ENCODE measurements at regions of chr10 and their contacts with region 1.

Region 1: GRCh38 chr10:73772280-73773151 is 9.3 kb upstream of the CHCHD1 start:
- DNase-seq: peak; percentile 80
- ATAC-seq: peak; percentile 67
- H3K4me3 Mint-ChIP-seq: peak overlapping the region; percentile 91
- H3K27ac Mint-ChIP-seq: peak overlapping the region; percentile 91
- H3K4me1 Mint-ChIP-seq: peaks cover 64% of the 10 kb centered on the region
- H3K27me3 Mint-ChIP-seq: no peaks in the 10 kb centered on the region
- CTCF ChIP-seq: no peak

Region 2: DNA sequence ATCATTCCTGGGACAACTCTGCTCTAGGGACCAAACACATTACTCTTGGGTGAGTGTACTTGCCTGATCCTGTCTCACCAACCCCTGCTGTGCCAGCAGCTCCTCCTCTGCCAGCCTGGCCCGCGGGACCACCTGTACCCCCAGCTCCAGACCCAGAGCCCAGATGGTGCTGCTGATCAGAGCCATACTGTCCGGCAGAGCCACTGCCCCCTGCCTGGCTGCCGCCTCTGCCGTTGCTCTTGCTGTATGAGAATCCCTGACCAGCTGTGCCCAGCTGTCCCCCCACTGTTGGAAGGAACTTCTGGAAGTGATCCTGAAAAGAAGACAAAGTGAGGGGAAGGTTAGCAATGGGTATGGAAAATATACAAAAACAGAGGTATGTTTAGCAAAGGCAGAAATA is 138.1 kb before region 1 on chr10:
- CTCF ChIA-PET with region 1: no interaction called
- POLR2A ChIA-PET with region 1: no interaction called
- intact Hi-C with region 1: no loop called
- DNase-seq: no peak
- ATAC-seq: no peak
- H3K4me3 Mint-ChIP-seq: no peak overlapping the region
- H3K27ac Mint-ChIP-seq: no peak overlapping the region
- H3K4me1 Mint-ChIP-seq: no peaks in the 10 kb centered on the region
- H3K27me3 Mint-ChIP-seq: no peaks in the 10 kb centered on the region
- CTCF ChIP-seq: no peak

Region 3: GRCh38 chr10:73730153-73730906 is 42.2 kb before region 1 on chr10:
- CTCF ChIA-PET with region 1: interaction called, 5 read pairs
- POLR2A ChIA-PET with region 1: interaction called, 12 read pairs
- intact Hi-C with region 1: loop called (anchors 2 kb)
- DNase-seq: peak; percentile 89
- ATAC-seq: peak; percentile 93
- H3K4me3 Mint-ChIP-seq: peak overlapping the region; percentile 99
- H3K27ac Mint-ChIP-seq: peak overlapping the region; percentile 96
- H3K4me1 Mint-ChIP-seq: peaks cover 22% of the 10 kb centered on the region
- H3K27me3 Mint-ChIP-seq: no peaks in the 10 kb centered on the region
- CTCF ChIP-seq: no peak

Region 4: GRCh38 chr10:73759512-73760115 is 12.9 kb before region 1 on chr10:
- CTCF ChIA-PET with region 1: no interaction called
- POLR2A ChIA-PET with region 1: interaction called, 12 read pairs
- intact Hi-C with region 1: no loop called
- DNase-seq: no peak
- ATAC-seq: peak; percentile 47
- H3K4me3 Mint-ChIP-seq: peak overlapping the region; percentile 28
- H3K27ac Mint-ChIP-seq: peak overlapping the region; percentile 56
- H3K4me1 Mint-ChIP-seq: peaks cover 20% of the 10 kb centered on the region
- H3K27me3 Mint-ChIP-seq: no peaks in the 10 kb centered on the region
- CTCF ChIP-seq: no peak

Region 5: DNA sequence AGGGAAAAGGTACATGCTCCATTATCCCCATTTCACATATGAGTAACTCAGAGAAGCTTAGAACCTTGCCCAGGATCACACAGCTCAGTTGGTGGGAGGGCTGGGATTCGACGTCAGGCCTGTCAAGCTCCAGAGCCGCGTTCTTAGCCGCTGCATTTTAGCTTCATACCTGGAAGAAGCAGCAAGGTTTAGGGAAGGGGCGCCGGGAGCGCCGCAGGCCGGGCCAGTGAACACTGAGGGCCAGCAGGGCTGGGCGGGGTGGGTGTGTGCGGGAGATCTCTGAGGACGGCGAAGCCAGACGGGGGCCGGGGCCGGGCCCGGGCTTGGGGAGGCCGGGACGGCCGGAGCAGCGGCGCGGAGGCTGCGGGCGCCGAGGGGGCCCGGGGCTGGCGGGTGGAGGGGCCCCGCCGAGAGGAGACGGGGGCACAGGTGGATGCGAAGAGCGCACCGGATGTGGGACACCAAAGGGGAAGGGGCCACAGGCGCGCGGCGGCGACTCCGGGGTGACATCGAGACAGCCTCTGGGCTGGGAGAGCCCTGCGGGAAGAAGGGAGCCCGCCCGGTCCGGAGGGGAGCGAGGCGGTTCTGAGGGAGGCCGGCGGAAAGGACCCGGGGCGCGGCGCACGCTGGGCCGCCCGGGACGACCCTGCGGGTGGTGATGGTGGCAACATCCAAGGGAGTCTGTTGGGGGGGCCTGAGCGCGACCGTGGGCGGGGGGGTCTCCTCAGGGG is 38.4 kb after region 1 on chr10:
- CTCF ChIA-PET with region 1: interaction called, 6 read pairs
- POLR2A ChIA-PET with region 1: interaction called, 10 read pairs
- intact Hi-C with region 1: loop called (anchors 1 kb)
- DNase-seq: no peak
- ATAC-seq: peak; percentile 9
- H3K4me3 Mint-ChIP-seq: peak overlapping the region; percentile 87
- H3K27ac Mint-ChIP-seq: peak overlapping the region; percentile 83
- H3K4me1 Mint-ChIP-seq: peaks cover 31% of the 10 kb centered on the region
- H3K27me3 Mint-ChIP-seq: no peaks in the 10 kb centered on the region
- CTCF ChIP-seq: no peak

Region 6: DNA sequence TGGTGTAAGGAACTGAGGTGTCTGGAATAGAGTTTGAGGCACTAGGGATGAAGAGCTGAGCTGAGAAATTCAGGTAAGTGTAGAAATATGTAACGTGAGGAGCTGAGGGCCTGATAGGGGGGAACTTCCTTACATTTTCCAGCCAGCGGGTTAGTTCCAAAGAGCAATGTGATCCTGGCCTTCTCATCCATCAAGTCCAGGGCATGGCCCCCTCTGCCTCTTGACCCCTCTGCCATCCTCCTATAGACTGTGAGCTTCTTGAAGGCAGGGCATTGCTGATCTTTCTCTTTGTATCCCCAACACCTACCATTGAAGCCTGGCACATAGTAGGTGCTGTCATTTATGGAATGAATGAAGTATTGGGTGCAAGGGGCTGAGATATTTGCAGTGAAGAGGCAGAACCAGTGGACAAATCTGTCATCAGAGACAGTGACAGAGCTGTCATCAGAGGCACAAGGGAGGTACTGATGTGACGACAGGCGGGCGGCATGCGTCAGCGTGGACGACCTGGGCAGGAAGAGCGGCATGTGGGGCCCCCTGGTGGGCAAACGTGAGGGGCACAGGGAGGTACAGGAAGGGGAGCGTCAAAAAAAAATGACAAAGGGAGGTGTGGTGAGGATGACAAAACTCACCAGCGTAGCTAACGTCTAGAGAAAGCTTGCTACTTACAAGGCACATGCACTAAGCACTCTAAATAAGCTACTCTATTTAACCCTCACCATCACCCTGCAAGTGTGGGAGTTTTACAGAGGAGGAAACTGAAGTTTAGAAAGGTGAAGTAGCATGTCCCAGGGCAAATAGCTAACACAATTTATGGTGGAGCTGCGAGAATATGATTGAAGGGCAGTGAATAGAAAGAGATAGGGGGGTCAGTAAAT is 107.0 kb after region 1 on chr10:
- CTCF ChIA-PET with region 1: interaction called, 19 read pairs
- POLR2A ChIA-PET with region 1: interaction called, 10 read pairs
- intact Hi-C with region 1: loop called (anchors 1 kb)
- DNase-seq: peak; percentile 86
- ATAC-seq: peak; percentile 96
- H3K4me3 Mint-ChIP-seq: no peak overlapping the region
- H3K27ac Mint-ChIP-seq: peak overlapping the region; percentile 67
- H3K4me1 Mint-ChIP-seq: peaks cover 22% of the 10 kb centered on the region
- H3K27me3 Mint-ChIP-seq: no peaks in the 10 kb centered on the region
- CTCF ChIP-seq: no peak

Region 7: GRCh38 chr10:74612195-74612594 is 839.7 kb after region 1 on chr10:
- CTCF ChIA-PET with region 1: no interaction called
- POLR2A ChIA-PET with region 1: no interaction called
- intact Hi-C with region 1: no loop called
- DNase-seq: no peak
- ATAC-seq: no peak
- H3K4me3 Mint-ChIP-seq: no peak overlapping the region
- H3K27ac Mint-ChIP-seq: no peak overlapping the region
- H3K4me1 Mint-ChIP-seq: peaks cover 12% of the 10 kb centered on the region
- H3K27me3 Mint-ChIP-seq: no peaks in the 10 kb centered on the region
- CTCF ChIP-seq: no peak

Measured in activated B cell treated with CpG ODN at 0.5 μM for 24 hours (primary cell).